Transverse colon (tissue), 4 donors: ENCODE measurements at regions of chr9 and their contacts with region 1.

Region 1: DNA sequence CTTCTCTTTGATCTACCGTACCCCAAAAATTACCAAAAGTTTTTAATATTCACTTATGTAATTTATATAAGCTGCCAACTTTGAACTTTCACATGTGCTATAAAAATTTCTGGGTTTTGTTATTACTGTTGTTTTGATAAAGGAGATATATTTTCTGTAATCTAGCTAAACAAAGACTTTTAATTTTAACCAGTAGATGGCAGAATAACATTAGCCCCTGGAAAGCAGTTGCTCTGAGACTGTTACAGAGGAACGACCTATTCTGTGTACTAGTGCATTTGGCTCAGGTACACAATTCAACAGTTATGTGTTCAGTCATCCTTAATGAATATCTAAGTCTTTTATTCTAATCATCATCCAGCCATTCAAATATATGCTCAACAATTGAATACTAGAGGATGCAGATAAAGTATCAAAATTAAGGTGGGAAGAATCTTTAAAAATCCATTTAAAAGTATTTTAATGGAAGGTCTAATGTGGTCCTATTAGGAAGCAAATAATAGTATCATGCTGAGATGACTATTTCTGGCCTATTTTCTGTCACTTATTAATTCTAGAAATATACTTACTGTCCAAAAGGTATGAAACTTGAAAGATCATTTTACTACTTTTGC is 8.6 kb downstream of the KLHL9 start:
- DNase-seq: no peak
- H3K4me3 ChIP-seq: no peak overlapping the region
- H3K27ac ChIP-seq: no peak overlapping the region
- H3K4me1 ChIP-seq: peaks cover 0 to 47% (median 13%) of the 10 kb centered on the region in 4 donors
- H3K27me3 ChIP-seq: no peaks in the 10 kb centered on the region
- CTCF ChIP-seq: peak; percentile 54 to 65 (median 62)
- EP300 ChIP-seq: no peak
- POLR2A ChIP-seq: no peak

Region 2: DNA sequence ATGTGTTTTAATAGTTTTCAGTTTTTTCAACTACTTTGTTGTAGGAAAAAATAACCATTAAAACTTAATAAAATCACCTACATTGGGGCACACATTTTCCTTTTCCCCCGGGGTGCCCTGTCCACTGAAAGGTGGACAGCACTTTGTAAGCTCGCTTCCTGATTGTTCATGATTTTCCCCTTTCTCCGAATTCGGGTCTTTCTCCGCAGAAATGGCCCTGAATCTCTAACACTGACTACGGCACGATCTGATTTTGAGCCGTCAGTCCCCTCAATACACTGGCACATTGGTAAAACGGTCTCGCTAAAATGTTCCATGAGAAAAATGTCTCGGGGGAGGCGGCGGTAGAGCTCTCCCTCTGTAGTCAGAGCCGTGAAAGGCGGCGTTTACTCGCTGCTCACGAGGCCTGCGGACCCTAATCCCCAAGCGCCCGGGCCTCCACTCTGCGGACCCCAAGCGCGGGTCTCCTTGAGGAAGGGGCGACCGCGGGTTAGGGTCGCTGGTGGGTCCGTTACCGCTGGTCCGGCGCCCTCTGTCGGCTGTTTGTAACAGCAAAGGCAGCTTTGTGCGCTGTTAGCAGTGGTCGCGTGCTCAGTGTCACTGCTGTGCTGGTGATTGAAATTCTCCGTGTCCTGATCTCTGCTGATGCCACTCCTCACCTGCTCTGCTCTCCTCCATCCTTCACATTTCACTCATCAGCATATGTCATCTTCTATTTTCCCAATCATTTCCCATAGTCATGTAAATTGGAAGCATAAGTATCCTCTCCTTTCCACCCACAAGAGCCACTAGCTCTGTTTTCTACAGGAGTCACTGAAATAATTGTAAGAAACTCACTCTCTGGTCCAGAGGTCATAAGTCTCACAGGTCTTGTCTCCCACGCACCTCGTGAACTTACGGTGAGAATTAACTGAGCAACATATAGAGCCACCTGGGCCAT is 69.4 kb after region 1 on chr9:
- in situ Hi-C with region 1: loop called in 2 of 4 experiments (anchors 10 kb)
- intact Hi-C with region 1: loop called (anchors 5 kb)
- DNase-seq: peak; percentile 48
- H3K4me3 ChIP-seq: peak overlapping the region; percentile 34 to 57 (median 46)
- H3K27ac ChIP-seq: no peak overlapping the region
- H3K4me1 ChIP-seq: peaks cover 0 to 8% (median 2%) of the 10 kb centered on the region in 4 donors
- H3K27me3 ChIP-seq: peaks cover 90% of the 10 kb centered on the region
- CTCF ChIP-seq: peak; percentile 57 to 80 (median 66)
- EP300 ChIP-seq: no peak
- POLR2A ChIP-seq: no peak

Region 3: GRCh38 chr9:21443849-21444625 is 117.4 kb after region 1 on chr9:
- in situ Hi-C with region 1: loop called in 2 of 4 experiments (anchors 10 to 25 kb)
- intact Hi-C with region 1: no loop called
- DNase-seq: no peak
- H3K4me3 ChIP-seq: no peak overlapping the region
- H3K27ac ChIP-seq: no peak overlapping the region
- H3K4me1 ChIP-seq: peaks cover 0 to 8% (median 0%) of the 10 kb centered on the region in 4 donors
- H3K27me3 ChIP-seq: no peaks in the 10 kb centered on the region
- CTCF ChIP-seq: no peak
- EP300 ChIP-seq: no peak
- POLR2A ChIP-seq: no peak

Region 4: DNA sequence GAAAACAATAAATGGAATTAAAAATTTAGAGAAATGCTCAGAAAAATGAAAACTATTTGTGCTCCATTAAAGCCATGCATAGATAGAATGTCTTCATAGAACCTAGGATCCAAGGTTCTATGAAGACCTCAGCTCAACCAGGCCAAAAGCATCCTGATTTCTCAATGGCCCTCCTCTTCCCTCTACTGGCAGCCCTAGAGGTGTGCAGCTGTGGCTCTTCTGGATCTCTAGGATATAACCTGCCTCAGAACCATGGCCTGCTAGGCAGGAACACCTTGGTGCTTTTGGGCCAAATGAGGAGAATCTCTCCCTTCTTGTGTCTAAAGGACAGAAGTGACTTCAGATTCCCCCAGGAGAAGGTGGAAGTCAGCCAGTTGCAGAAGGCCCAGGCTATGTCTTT is 128.7 kb after region 1 on chr9:
- in situ Hi-C with region 1: no loop called
- intact Hi-C with region 1: loop called (anchors 5 kb)
- DNase-seq: peak; percentile 16
- H3K4me3 ChIP-seq: no peak overlapping the region
- H3K27ac ChIP-seq: no peak overlapping the region
- H3K4me1 ChIP-seq: no peaks in the 10 kb centered on the region
- H3K27me3 ChIP-seq: peaks cover under 1% of the 10 kb centered on the region
- CTCF ChIP-seq: peak; percentile 59 to 74 (median 70)
- EP300 ChIP-seq: no peak
- POLR2A ChIP-seq: no peak